Sigmoid colon (tissue), 7 donors: ENCODE measurements at regions of chr15 and their contacts with region 1.

Region 1: DNA sequence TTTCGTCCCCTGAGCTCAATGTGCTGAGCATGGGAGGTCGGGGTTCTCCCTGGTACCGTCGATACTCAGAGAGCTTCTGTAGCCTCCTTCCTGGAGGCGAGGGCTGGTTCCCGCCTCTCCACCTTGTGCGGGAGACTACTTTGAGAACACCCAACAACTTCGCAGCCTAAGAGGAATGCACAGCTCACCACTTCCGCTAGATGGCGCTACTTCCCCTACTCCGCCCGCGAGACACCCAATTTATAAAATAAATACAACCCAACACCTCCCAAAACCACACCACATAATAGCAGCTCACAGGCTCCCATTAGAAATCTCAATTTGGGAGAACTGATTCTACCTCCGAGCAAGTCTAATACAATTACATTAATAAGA is 1.2 kb downstream of the RGMA start:
- DNase-seq: peak; percentile 92
- H3K4me3 ChIP-seq: peak overlapping the region; percentile 54 to 87 (median 72)
- H3K27ac ChIP-seq: peak overlapping the region; percentile 85 to 96 (median 90)
- H3K4me1 ChIP-seq: peaks cover 0 to 58% (median 37%) of the 10 kb centered on the region in 4 donors
- H3K27me3 ChIP-seq: peaks cover 0 to 5% (median 0%) of the 10 kb centered on the region in 3 donors
- CTCF ChIP-seq: peak; percentile 83 to 90 (median 89)
- EP300 ChIP-seq: no peak
- POLR2A ChIP-seq: no peak

Region 2: DNA sequence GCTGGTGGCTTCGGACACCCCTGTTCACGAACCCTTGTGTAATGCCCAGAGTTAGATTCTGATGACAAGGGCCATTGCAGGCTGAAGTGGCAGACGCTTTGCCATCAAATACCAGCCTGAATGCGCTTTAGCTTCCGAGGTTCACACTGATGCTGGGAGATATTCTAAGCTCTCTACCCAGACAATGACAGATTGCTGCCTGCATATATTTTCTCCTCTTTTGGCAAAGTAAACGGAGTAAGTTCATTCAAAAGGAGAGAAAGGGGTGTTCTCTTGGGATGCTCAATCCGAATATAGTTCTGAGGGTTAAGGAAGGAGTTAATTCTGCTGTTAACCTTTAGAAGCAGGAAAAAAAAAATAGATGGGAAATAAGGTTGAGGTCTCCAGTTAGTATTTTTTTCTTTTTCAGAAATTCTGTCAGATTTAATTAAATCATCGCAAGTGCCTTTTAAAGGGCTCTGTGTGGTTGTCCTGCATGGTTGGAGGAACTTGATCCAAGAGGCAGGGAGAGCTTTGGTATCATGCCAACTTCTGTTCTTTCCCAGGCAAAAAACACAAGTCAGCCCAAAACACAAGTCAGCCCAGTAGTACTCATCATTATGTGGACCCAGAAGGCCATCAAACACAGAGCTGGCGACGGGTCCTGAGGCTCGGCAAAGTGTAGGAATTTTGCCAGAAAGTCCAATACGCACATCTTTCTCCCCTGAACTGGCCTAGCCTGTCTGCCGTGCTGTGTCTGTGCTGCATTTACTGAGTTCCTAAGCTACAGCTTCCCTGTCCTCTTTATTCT is 765.1 kb before region 1 on chr15:
- intact Hi-C with region 1: no loop called
- DNase-seq: no peak
- H3K4me3 ChIP-seq: no peak overlapping the region
- H3K27ac ChIP-seq: no peak overlapping the region
- H3K4me1 ChIP-seq: peaks cover 0 to 14% (median 3%) of the 10 kb centered on the region in 4 donors
- H3K27me3 ChIP-seq: no peaks in the 10 kb centered on the region
- CTCF ChIP-seq: no peak
- EP300 ChIP-seq: no peak
- POLR2A ChIP-seq: no peak

Region 3: DNA sequence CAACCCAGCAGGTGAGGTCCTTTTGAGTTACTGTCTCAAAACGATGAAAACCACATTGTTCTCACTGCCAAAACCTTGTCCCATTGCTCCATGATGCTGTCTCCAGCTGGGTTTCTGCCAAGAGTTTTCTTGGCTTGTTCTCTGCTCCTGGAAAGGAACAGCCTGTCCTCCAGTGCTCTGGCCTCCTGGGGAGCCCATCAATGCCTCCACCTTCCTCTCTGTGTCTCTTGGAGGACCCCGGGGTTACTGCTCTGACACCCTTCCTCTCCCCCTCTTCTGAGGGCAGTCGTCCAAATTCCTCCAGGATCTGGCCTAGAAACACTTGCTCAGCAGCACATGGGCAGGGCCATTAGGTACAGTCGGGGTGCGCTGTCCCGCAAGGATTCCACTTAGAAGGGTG is 65.1 kb after region 1 on chr15:
- intact Hi-C with region 1: loop called (anchors 5 kb)
- DNase-seq: peak; percentile 94
- H3K4me3 ChIP-seq: no peak overlapping the region
- H3K27ac ChIP-seq: peak overlapping the region in 3 of 4 donors; percentile 49 to 59 (median 56)
- H3K4me1 ChIP-seq: peaks cover 0 to 34% (median 23%) of the 10 kb centered on the region in 4 donors
- H3K27me3 ChIP-seq: no peaks in the 10 kb centered on the region
- CTCF ChIP-seq: no peak
- EP300 ChIP-seq: peak in 3 of 4 donors; percentile 58 to 84 (median 71)
- POLR2A ChIP-seq: no peak

Region 4: GRCh38 chr15:93359425-93360131 is 271.8 kb after region 1 on chr15:
- intact Hi-C with region 1: loop called (anchors 2 kb)
- DNase-seq: peak; percentile 35
- H3K4me3 ChIP-seq: no peak overlapping the region
- H3K27ac ChIP-seq: peak overlapping the region in 3 of 4 donors; percentile 69 to 85 (median 84)
- H3K4me1 ChIP-seq: peaks cover 0 to 39% (median 27%) of the 10 kb centered on the region in 4 donors
- H3K27me3 ChIP-seq: no peaks in the 10 kb centered on the region
- CTCF ChIP-seq: no peak
- EP300 ChIP-seq: peak in 1 of 4 donors; percentile 21
- POLR2A ChIP-seq: no peak

Region 5: DNA sequence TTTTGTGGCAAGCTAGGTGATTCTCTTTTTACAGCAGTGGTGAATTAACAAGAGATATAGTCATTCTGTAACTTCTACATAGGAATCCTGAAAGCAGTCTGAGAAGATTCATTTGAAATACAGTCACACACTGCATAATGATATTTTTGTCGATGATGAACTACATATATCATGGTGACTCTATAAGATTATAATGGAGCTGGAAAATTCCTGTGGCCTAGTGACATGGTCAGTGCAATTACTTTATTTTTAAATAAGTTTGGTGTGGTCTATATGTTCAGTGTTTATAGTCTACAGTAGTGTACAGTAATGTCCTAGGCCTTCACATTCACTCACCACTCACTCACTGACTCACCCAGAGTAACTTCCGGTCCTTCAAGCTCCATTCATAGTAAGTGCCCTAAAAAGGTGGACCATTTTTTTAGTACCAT is 632.1 kb after region 1 on chr15:
- intact Hi-C with region 1: no loop called
- DNase-seq: no peak
- H3K4me3 ChIP-seq: no peak overlapping the region
- H3K27ac ChIP-seq: no peak overlapping the region
- H3K4me1 ChIP-seq: no peaks in the 10 kb centered on the region
- H3K27me3 ChIP-seq: no peaks in the 10 kb centered on the region
- CTCF ChIP-seq: no peak
- EP300 ChIP-seq: no peak
- POLR2A ChIP-seq: no peak

Region 6: GRCh38 chr15:93997084-93997918 is 909.5 kb after region 1 on chr15:
- intact Hi-C with region 1: loop called (anchors 5 kb)
- DNase-seq: no peak
- H3K4me3 ChIP-seq: no peak overlapping the region
- H3K27ac ChIP-seq: no peak overlapping the region
- H3K4me1 ChIP-seq: peaks cover 0 to 41% (median 17%) of the 10 kb centered on the region in 4 donors
- H3K27me3 ChIP-seq: no peaks in the 10 kb centered on the region
- CTCF ChIP-seq: peak; percentile 64 to 78 (median 66)
- EP300 ChIP-seq: no peak
- POLR2A ChIP-seq: no peak